Activated T-helper 2 cell treated with anti-CD3 and anti-CD28 coated beads, Interferon-gamma antibody, Interleukin-2, Interleukin-4, amounts not matched to agents 10 μg/mL and 5 μg/mL and 100 μg/mL, durations not matched to agents 14 hours and 24 hours and 36 hours (primary cell): ENCODE measurements at regions of chr11 and their contacts with region 1.

Region 1: DNA sequence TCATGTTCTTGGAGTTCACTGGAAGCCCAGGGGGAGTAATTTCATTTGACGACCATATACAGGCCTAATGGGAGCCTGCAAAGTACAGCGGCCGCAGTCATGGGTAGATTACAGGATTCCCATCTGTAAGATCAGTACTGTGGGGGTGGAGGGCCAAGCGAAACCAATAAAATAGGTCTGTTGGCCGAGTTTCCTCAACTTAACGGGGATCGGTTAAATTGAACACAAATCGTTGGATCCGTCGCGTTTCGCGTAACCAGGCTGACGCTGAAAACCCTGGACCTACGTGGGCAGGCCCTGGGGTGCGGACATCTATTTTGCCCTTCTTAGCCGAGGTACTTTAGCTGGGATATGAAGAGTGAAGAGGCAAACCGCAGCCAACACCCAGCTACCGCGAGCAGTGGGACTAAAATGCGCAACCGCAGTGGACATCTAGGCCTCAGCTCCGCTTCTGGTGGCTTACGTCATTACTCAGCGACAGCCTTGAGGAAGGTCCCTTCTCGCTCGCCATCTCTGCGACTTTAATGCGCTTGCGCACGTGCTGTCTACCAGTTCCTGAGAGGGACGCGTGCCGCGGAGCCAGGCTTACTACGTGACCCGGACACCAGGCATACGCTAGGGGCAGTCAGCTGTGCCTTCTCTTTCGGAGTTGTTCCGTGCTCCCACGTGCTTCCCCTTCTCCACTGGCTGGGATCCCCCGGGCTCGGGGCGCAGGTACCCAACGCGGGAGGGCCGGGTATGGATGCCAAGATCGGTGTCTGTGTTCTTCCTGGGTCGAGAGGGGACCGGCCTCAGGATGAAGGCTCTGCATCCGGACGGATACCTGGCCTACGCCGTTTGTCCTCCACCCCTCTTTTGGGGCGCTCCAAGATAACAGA is at the start of gene NAT10:
- DNase-seq: peak; percentile 97
- H3K4me3 Mint-ChIP-seq: peak within 1 kb of the TSS; percentile 95
- H3K27ac Mint-ChIP-seq: peak within 1 kb of the TSS; percentile 94
- H3K4me1 Mint-ChIP-seq: peaks cover 33% of the 10 kb centered on the region
- H3K27me3 Mint-ChIP-seq: no peaks in the 10 kb centered on the region
- total RNA-seq, gene NAT10: 124 and 125 TPM in 2 replicates

Region 2: GRCh38 chr11:33959855-33960400 is 145.4 kb before region 1 on chr11:
- intact Hi-C with region 1: no loop called
- DNase-seq: no peak
- H3K4me3 Mint-ChIP-seq: no peak overlapping the region
- H3K27ac Mint-ChIP-seq: no peak overlapping the region
- H3K4me1 Mint-ChIP-seq: no peaks in the 10 kb centered on the region
- H3K27me3 Mint-ChIP-seq: peaks cover 21% of the 10 kb centered on the region

Region 3: GRCh38 chr11:33996498-33997454 is 108.5 kb before region 1 on chr11:
- intact Hi-C with region 1: loop called (anchors 2 kb)
- DNase-seq: peak; percentile 65
- H3K4me3 Mint-ChIP-seq: no peak overlapping the region
- H3K27ac Mint-ChIP-seq: no peak overlapping the region
- H3K4me1 Mint-ChIP-seq: peaks cover 9% of the 10 kb centered on the region
- H3K27me3 Mint-ChIP-seq: peaks cover 30% of the 10 kb centered on the region

Region 4: DNA sequence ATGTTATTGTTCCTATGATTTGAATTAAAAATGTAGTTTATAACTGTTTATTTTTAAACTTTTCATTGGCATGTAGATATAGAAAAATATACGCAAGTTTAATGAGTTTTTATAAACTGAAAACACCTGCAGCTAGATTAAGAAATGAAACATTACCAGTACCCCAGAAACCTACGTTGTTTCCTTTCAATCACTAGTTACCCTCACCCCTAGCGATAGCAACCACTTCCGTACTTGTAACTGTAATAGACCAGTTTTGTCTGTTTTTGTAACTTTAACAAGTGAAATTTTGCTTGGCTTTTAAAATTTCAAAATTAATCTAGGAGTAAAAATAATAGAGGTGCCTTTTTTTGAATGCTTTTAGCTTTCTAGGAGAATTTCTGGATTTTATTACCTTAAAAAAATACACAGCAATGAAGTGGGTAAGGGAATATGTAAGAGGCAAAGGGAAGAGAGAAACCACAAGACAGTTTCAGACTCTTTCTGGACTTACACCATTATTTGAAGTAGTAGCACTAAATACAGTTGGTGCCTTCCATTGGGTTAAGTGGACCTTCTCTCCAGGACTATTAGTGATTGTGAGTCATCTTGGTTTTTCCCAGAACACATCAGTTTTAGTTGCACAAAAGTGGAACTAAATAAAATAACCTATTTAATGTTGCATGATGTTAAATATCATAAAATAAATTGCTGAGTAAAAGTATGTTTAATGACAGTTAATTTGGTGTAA is 18.6 kb before region 1 on chr11:
- intact Hi-C with region 1: no loop called
- DNase-seq: no peak
- H3K4me3 Mint-ChIP-seq: no peak overlapping the region
- H3K27ac Mint-ChIP-seq: peak overlapping the region; percentile 49
- H3K4me1 Mint-ChIP-seq: peaks cover 21% of the 10 kb centered on the region
- H3K27me3 Mint-ChIP-seq: no peaks in the 10 kb centered on the region